Activated naive CD4-positive, alpha-beta T cell treated with anti-CD3 and anti-CD28 coated beads for 36 hours (primary cell): ENCODE measurements at regions of chrX and their contacts with region 1.

Region 1: GRCh38 chrX:118627084-118627758 is 100.2 kb upstream of the IL13RA1 start:
- DNase-seq: no peak
- H3K4me3 Mint-ChIP-seq: no peak overlapping the region
- H3K27ac Mint-ChIP-seq: no peak overlapping the region
- H3K4me1 Mint-ChIP-seq: no peaks in the 10 kb centered on the region
- H3K27me3 Mint-ChIP-seq: no peaks in the 10 kb centered on the region

Region 2: GRCh38 chrX:118726887-118727739 is 99.9 kb after region 1 on chrX and contains the start of gene IL13RA1:
- CTCF ChIA-PET with region 1: no interaction called
- intact Hi-C with region 1: loop called (anchors 5 kb)
- DNase-seq: peak; percentile 38
- H3K4me3 Mint-ChIP-seq: peak within 1 kb of the TSS; percentile 54
- H3K27ac Mint-ChIP-seq: no peak within 1 kb of the TSS
- H3K4me1 Mint-ChIP-seq: peaks cover 5% of the 10 kb centered on the region
- H3K27me3 Mint-ChIP-seq: peaks cover 18% of the 10 kb centered on the region
- total RNA-seq, gene IL13RA1: 1.8 to 1.9 TPM

Region 3: GRCh38 chrX:118823263-118824172 is 196.3 kb after region 1 on chrX and contains the start of gene ZCCHC12:
- CTCF ChIA-PET with region 1: no interaction called
- intact Hi-C with region 1: loop called (anchors 5 kb)
- DNase-seq: peak; percentile 43
- H3K4me3 Mint-ChIP-seq: peak within 1 kb of the TSS; percentile 60
- H3K27ac Mint-ChIP-seq: no peak within 1 kb of the TSS
- H3K4me1 Mint-ChIP-seq: peaks cover 22% of the 10 kb centered on the region
- H3K27me3 Mint-ChIP-seq: peaks cover 38% of the 10 kb centered on the region
- total RNA-seq, gene ZCCHC12: 0.14 to 0.25 TPM